ENCODE measurements at regions of chr5 and their contacts with region 1.

Region 1: DNA sequence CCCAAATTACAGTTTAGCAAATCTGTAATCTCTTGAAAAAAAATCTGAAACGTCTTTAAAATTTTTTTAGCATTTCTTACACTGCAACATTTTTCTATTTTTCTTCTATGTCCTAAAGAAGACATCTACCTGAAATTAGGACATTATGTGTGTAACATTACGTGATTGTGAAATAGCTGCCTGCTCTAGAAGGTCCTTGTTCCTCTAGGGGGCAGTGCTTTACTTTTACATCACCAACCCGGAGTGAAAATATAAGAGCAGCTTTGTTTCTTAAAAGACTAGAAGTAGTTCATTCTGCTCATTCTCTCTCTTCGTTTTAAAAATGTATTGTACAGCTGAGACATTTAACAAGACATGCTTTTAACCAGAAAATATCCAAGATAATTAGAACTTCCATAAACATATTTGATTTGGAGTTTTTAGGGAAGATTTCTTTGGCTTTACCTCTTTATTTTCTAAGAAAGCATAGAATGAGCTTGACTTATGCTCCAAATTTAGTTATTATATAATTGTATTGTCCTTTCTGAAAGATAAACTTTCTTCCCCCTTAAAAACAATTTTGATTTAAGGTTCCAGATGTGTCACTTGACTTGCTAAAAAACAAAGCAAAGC is 48.1 kb upstream of the RIOK2 start:
- DNase-seq: no peak
- ATAC-seq: peak; percentile 82

Region 2: DNA sequence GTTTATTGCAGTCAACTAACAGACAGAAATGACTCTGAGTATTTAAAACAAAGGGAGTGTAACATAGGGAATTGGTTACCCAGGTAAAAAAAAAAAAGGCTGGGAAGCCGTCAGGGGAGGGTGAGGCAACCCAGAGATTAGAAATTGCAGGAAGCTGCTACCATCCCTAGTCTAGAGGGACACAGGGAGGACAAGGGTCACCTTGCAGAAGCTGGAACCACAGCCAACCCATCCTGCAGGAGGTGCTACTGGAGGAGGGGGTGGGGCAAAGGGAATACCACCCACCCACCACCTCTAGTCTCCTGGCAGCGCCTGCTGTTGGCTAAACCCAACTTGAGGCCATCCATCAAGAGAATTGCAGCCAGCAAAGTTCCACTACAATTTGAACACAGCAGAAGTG is 562.4 kb before region 1 on chr5:
- intact Hi-C with region 1: no loop called
- DNase-seq: peak; percentile 59 to 79
- ATAC-seq: peak; percentile 80

Region 3: DNA sequence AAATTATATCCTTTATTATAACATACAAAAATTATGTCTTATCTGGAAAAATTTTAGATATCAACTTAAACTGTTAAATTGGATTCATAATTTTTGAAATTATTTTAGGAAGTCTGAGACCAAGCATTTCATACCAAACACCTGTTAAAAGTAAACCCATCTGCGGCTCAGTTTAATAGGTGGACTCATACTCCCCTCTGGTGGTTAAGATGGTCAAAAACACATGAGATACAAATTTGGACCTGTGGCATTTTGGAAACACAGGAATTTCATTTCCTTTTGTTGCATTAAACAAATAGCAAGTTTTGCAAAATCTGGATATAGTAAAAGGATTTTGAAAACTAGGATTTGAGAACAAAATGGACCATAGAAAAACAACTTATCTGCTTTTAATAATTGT is 1596.0 kb after region 1 on chr5:
- intact Hi-C with region 1: loop called in 1 of 2 experiments (anchors 10 kb)
- DNase-seq: no peak
- ATAC-seq: peak; percentile 70

Measured in left colon (tissue), 2 donors.